IMR-90 (cell line): ENCODE measurements at regions of chr1 and their contacts with region 1.

Region 1: GRCh38 chr1:85307987-85308832 is 31.8 kb upstream of the BCL10 start:
- DNase-seq: peak; percentile 84
- ATAC-seq: peak; percentile 98
- H3K4me3 ChIP-seq: no peak overlapping the region
- H3K27ac ChIP-seq: peak overlapping the region; percentile 33; the same call in 1 of the 2 replicates
- H3K4me1 ChIP-seq: peaks cover 7% of the 10 kb centered on the region
- H3K27me3 ChIP-seq: no peaks in the 10 kb centered on the region
- CTCF ChIP-seq: peak; percentile 100; the same call in 1 of the 2 replicates
- POLR2A ChIP-seq: peak; percentile 65; the same call in 1 of the 2 replicates
- RAD21 ChIP-seq: peak; percentile 100

Region 2: DNA sequence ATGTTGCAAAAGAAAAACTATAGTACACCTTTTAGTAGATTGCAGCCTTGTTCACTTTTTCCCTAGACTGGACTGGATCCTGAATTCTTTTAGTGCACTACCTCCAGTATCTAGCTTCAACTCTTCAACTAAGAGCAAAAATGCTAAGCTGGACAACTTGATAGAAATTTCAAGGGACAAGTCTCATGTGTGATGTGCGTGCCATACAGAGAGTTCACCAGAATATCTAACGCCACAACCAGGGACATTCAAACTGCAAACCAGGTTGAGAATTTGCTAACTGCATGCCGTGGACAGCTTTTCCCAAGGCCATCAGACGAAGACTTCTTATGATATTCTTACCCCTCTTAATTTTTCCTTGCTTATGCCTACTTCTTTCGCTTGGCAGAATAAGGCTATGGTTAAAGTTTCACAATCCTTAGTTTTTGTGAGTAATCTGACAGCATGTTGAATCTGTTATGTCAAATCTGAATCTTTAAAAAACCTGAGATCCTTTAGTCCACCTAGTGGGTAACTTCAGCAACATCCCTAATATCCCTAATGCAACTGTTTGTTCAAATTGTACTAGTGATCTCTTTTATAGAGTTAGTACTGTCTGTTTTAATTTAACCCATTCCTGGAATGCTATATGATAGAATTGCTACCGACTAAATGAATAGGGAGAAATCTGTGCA is 90.3 kb after region 1 on chr1:
- CTCF ChIA-PET with region 1: no interaction called
- POLR2A ChIA-PET with region 1: interaction called, 5 read pairs
- dilution Hi-C with region 1: no loop called
- in situ Hi-C with region 1: loop called (anchors 5 kb)
- intact Hi-C with region 1: loop called (anchors 2 kb)
- DNase-seq: peak; percentile 71
- ATAC-seq: peak; percentile 32
- H3K4me3 ChIP-seq: no peak overlapping the region
- H3K27ac ChIP-seq: peak overlapping the region; percentile 0; the same call in 1 of the 2 replicates
- H3K4me1 ChIP-seq: peaks cover 9% of the 10 kb centered on the region
- H3K27me3 ChIP-seq: no peaks in the 10 kb centered on the region
- CTCF ChIP-seq: peak; percentile 52
- POLR2A ChIP-seq: no peak
- RAD21 ChIP-seq: peak; percentile 61

Region 3: DNA sequence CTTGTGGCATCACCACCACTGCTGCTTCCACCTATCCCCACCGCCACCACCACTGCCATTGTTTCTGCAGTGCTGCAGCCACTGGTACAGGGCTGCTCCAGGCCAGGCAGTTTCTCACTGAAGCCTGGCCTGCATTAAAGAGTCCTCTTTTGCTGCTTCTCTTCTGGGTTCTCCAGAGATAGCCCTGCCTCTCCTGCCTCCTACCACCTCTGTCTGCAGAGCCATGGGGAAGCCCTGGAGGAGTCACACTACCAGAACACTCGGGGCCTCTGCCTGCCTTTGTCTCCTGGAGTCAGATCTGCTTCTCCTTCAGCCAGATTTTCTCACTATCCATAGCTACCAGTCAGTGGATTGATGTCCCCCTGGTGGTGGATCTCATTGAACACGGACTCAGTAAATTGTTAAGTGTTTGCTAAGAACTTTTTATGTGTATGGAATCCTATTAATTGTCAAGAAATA is 194.4 kb after region 1 on chr1:
- CTCF ChIA-PET with region 1: interaction called, 3 read pairs
- POLR2A ChIA-PET with region 1: no interaction called
- dilution Hi-C with region 1: no loop called
- in situ Hi-C with region 1: no loop called
- intact Hi-C with region 1: loop called (anchors 1 kb)
- DNase-seq: peak; percentile 85
- ATAC-seq: peak; percentile 76
- H3K4me3 ChIP-seq: no peak overlapping the region
- H3K27ac ChIP-seq: peak overlapping the region; percentile 40
- H3K4me1 ChIP-seq: peaks cover 6% of the 10 kb centered on the region
- H3K27me3 ChIP-seq: no peaks in the 10 kb centered on the region
- CTCF ChIP-seq: peak; percentile 64
- POLR2A ChIP-seq: no peak
- RAD21 ChIP-seq: peak; percentile 47

Region 4: DNA sequence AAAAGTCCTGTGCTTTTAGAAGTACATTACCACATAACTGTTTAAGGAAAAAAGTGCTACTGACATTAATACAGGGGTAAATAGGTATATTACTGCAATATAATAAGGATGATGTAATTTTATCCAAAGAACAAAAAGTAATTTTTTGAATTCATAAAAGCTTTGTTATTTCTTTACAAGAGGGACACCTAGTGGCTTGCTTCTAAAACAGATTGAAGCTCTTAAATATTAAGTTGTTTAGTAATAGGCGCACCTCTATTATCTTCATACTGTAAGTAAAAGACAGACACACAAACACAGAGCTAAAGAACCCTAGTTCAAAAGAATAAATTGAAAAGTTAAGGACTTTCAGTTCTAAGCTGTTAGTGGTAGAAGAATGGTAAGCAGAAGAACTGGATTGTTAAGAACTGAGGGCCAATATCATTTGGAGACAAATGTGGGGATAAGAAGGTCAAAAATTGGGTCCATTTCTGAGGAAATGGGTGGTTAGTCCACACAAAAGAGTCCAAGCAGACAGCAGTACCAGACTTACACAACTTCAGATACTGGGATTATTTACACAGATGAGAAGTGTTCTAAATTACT is 384.6 kb after region 1 on chr1:
- CTCF ChIA-PET with region 1: interaction called, 4 read pairs
- POLR2A ChIA-PET with region 1: no interaction called
- dilution Hi-C with region 1: no loop called
- in situ Hi-C with region 1: loop called (anchors 5 kb)
- intact Hi-C with region 1: loop called (anchors 1 kb)
- DNase-seq: peak; percentile 78
- ATAC-seq: peak; percentile 74
- H3K4me3 ChIP-seq: no peak overlapping the region
- H3K27ac ChIP-seq: no peak overlapping the region
- H3K4me1 ChIP-seq: no peaks in the 10 kb centered on the region; the same call in 1 of the 2 replicates
- H3K27me3 ChIP-seq: no peaks in the 10 kb centered on the region
- CTCF ChIP-seq: peak; percentile 67
- POLR2A ChIP-seq: no peak
- RAD21 ChIP-seq: peak; percentile 69

Region 5: GRCh38 chr1:86356247-86356646 is 1048.0 kb after region 1 on chr1:
- CTCF ChIA-PET with region 1: no interaction called
- POLR2A ChIA-PET with region 1: no interaction called
- dilution Hi-C with region 1: no loop called
- in situ Hi-C with region 1: loop called (anchors 10 kb)
- intact Hi-C with region 1: no loop called
- DNase-seq: peak; percentile 10
- ATAC-seq: no peak
- H3K4me3 ChIP-seq: no peak overlapping the region
- H3K27ac ChIP-seq: no peak overlapping the region
- H3K4me1 ChIP-seq: no peaks in the 10 kb centered on the region
- H3K27me3 ChIP-seq: no peaks in the 10 kb centered on the region
- CTCF ChIP-seq: 0 out of 2 replicates have a peak, but pooled peaks have one; percentile 15
- POLR2A ChIP-seq: no peak
- RAD21 ChIP-seq: peak; percentile 42